ENCODE measurements at regions of chr3 and their contacts with region 1.

Region 1: DNA sequence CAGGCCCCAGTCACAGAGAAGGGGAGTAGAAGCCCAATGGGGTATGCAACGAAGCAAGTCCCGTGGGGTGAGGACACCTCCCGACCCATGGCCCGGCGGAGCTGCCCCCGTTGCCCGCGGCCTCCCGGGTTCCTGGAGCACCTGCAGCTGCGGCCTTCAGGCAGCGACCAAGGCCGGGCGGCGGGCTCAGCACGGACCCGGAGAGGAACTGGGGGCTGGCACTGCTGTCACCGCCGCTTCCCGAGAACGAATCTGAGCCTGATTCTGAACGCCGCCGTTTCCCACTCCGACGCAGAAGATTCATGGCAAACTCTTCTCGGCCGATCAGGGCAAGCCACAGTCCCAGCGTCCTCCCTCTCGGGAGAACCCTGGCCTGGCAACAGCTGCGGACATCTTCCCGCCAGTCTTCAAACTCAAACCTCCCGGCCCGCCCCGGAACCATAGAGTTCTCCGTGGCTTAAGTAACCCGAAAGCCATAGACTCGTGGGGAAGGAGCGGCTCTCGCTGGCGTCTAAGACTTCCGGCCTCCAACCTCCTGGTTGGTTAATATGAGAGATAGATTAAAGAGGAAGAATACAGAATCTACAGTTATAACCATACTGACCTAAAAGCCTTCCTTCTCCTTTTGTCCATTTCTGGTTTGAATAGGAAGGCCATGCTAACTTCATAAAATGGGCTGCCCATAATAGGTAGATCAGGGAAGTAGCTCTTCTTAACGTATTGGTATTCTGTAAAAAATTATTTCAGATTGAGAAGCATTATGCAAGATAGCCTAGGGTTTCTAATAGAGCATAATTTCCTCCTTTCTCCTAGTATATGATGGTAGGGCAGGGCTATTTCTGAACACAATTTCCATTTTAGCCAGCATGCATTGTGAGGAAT is at the start of gene POLQ:
- DNase-seq: peak; percentile 73 to 93 (median 88)
- ATAC-seq: peak; percentile 99
- H3K4me3 ChIP-seq: peak within 1 kb of the TSS; percentile 65 to 72
- H3K4me3 Mint-ChIP-seq: peak within 1 kb of the TSS; percentile 92
- H3K27ac ChIP-seq: peak within 1 kb of the TSS; percentile 53 to 75
- H3K27ac Mint-ChIP-seq: peak within 1 kb of the TSS; percentile 88
- H3K4me1 ChIP-seq: peaks cover 6% of the 10 kb centered on the region
- H3K4me1 Mint-ChIP-seq: peaks cover 12% of the 10 kb centered on the region
- H3K27me3 ChIP-seq: peaks cover 0 to 2% of the 10 kb centered on the region in 2 experiments
- H3K27me3 Mint-ChIP-seq: no peaks in the 10 kb centered on the region
- CTCF ChIP-seq: no peak
- total RNA-seq, gene POLQ: 0.19 to 0.28 TPM

Region 2: GRCh38 chr3:121431726-121432517 is 113.9 kb before region 1 on chr3:
- CTCF ChIA-PET with region 1: no interaction called
- POLR2A ChIA-PET with region 1: no interaction called
- intact Hi-C with region 1: loop called in 1 of 2 experiments (anchors 5 kb)
- DNase-seq: peak in 8 of 9 experiments; percentile 18 to 82 (median 48)
- ATAC-seq: peak; percentile 95
- H3K4me3 ChIP-seq: peak overlapping the region; percentile 26 to 39
- H3K4me3 Mint-ChIP-seq: peak overlapping the region; percentile 81
- H3K27ac ChIP-seq: peak overlapping the region; percentile 2 to 28
- H3K27ac Mint-ChIP-seq: peak overlapping the region; percentile 80
- H3K4me1 ChIP-seq: peaks cover 3% of the 10 kb centered on the region
- H3K4me1 Mint-ChIP-seq: peaks cover 14% of the 10 kb centered on the region
- H3K27me3 ChIP-seq: no peaks in the 10 kb centered on the region
- H3K27me3 Mint-ChIP-seq: no peaks in the 10 kb centered on the region
- CTCF ChIP-seq: no peak

Region 3: GRCh38 chr3:121995161-121996137 is 449.6 kb after region 1 on chr3:
- CTCF ChIA-PET with region 1: no interaction called
- POLR2A ChIA-PET with region 1: no interaction called
- intact Hi-C with region 1: loop called in 1 of 2 experiments (anchors 5 kb)
- DNase-seq: peak in 4 of 9 experiments; percentile 9 to 53 (median 39)
- ATAC-seq: peak; percentile 52
- H3K4me3 ChIP-seq: no peak overlapping the region
- H3K4me3 Mint-ChIP-seq: no peak overlapping the region
- H3K27ac ChIP-seq: no peak overlapping the region
- H3K27ac Mint-ChIP-seq: no peak overlapping the region
- H3K4me1 ChIP-seq: no peaks in the 10 kb centered on the region
- H3K4me1 Mint-ChIP-seq: peaks cover 10% of the 10 kb centered on the region
- H3K27me3 ChIP-seq: no peaks in the 10 kb centered on the region
- H3K27me3 Mint-ChIP-seq: peaks cover 3% of the 10 kb centered on the region
- CTCF ChIP-seq: no peak

Region 4: DNA sequence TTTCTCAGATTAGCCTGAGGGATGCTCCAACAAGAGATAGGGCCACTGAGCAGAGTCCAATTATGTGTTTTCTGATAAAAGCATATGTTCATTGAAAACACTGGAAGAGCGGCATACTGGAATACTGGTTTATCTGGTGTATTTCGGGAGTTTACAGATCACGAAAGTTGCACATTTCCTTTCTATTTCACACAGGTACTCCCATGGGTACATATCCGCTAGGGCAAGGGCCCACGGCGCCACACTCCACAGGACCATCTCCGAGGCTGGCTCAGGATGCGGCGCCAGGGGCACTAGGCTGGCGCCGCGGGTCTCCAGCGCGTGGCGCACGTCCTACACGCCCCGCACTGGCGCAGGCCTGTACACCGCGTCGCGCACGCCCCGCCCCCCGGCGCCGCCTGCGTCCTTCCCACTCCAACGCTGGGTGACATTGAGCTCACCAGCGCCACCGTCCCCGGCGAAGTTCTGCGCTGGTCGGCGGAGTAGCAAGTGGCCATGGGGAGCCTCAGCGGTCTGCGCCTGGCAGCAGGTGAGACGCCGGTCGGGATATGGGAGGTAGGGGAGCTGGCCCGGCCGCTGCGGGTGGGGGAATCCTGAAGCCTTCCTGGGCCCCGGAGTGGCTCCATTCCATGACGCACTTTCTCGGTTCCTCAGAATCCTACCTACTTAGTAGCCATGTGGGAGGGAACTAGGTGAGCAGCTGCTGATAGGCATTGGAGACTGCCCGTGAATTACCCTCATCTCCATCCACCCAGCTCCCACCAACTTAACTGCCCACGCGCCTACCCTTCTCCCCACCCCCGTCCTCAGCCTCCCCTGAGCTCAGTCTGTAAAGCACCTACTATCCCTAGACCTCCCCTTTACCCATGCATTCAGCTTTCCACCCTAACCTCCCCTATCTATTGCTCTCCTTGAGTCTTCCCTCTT is 838.2 kb after region 1 on chr3 and contains the start of gene FAM162A:
- CTCF ChIA-PET with region 1: interaction called, 3 read pairs
- POLR2A ChIA-PET with region 1: interaction called, 5 read pairs
- intact Hi-C with region 1: loop called (anchors 1 kb)
- DNase-seq: peak; percentile 89 to 97 (median 93)
- ATAC-seq: peak; percentile 94
- H3K4me3 ChIP-seq: peak within 1 kb of the TSS; percentile 79 to 91
- H3K4me3 Mint-ChIP-seq: peak within 1 kb of the TSS; percentile 94
- H3K27ac ChIP-seq: peak within 1 kb of the TSS; percentile 73 to 83
- H3K27ac Mint-ChIP-seq: peak within 1 kb of the TSS; percentile 94
- H3K4me1 ChIP-seq: peaks cover 18% of the 10 kb centered on the region
- H3K4me1 Mint-ChIP-seq: peaks cover 51% of the 10 kb centered on the region
- H3K27me3 ChIP-seq: no peaks in the 10 kb centered on the region
- H3K27me3 Mint-ChIP-seq: no peaks in the 10 kb centered on the region
- CTCF ChIP-seq: peak; percentile 66
- total RNA-seq, gene FAM162A: 36.9 to 38.2 TPM

Region 5: DNA sequence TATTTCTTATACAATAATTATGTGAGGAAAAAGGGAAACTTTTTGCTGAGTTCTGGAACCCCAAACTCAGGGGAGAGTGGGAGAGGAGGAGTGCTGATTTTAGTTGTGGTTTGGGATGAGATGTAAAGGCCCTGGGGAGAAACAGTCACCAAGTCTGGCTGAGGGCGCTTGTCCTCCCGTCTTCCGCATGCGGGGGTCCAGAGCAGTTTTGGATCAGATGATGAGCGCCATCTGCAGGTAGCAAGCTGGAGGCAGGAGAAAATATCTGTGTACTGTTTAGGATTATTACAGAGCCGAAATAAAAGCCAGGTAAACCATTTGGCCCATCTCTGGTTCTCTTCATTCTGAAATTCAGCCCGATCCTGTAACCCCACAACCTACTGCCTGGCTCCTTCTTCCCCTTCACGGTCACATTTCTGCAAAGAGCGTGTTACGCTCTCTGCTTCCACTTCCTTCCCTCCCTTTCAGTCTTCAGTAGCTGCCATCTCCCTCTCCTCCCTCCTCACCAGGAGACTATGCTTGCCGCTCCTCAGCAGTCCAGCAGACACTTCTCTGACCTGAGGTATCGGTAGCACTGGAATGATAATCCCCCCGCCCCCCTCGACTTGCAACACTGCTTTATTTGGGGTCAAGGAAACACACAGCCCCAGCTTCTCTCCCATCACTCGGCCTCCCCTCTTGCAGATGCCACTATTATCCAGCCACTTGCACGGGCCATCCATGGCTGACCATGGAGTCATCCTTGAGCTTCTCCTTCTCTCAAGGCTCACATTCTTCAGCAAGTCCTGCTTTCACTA is 1133.5 kb after region 1 on chr3:
- CTCF ChIA-PET with region 1: interaction called, 6 read pairs
- POLR2A ChIA-PET with region 1: interaction called, 8 read pairs
- intact Hi-C with region 1: loop called (anchors 1 kb)
- DNase-seq: peak; percentile 65 to 92 (median 83)
- ATAC-seq: peak; percentile 66
- H3K4me3 ChIP-seq: peak overlapping the region; percentile 88 to 98
- H3K4me3 Mint-ChIP-seq: peak overlapping the region; percentile 93
- H3K27ac ChIP-seq: peak overlapping the region; percentile 95 to 97
- H3K27ac Mint-ChIP-seq: peak overlapping the region; percentile 99
- H3K4me1 ChIP-seq: peaks cover 31% of the 10 kb centered on the region
- H3K4me1 Mint-ChIP-seq: peaks cover 51% of the 10 kb centered on the region
- H3K27me3 ChIP-seq: no peaks in the 10 kb centered on the region
- H3K27me3 Mint-ChIP-seq: no peaks in the 10 kb centered on the region
- CTCF ChIP-seq: peak; percentile 80

Region 6: DNA sequence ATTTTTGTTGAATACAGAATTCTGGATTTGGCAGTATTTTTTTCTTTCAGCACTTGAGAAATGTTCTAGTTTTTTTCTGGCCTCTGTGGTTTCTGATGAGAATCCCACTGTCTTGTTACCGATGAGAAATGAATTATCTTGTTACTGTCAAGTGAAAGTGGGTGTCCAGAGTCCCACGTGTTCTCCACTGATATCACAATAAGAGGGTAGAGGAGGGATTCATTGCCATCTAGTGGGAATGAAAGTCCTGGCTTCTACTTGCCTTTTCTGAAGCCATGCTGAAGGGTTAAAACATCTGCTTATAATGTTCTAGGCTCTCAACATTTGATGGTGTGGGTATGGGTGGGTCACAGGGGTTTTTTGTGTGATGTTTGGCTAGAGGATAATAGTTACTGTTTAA is 1722.0 kb after region 1 on chr3:
- CTCF ChIA-PET with region 1: no interaction called
- POLR2A ChIA-PET with region 1: no interaction called
- intact Hi-C with region 1: loop called in 1 of 2 experiments (anchors 10 kb)
- DNase-seq: no peak
- ATAC-seq: no peak
- H3K4me3 ChIP-seq: no peak overlapping the region
- H3K4me3 Mint-ChIP-seq: no peak overlapping the region
- H3K27ac ChIP-seq: no peak overlapping the region
- H3K27ac Mint-ChIP-seq: no peak overlapping the region
- H3K4me1 ChIP-seq: no peaks in the 10 kb centered on the region
- H3K4me1 Mint-ChIP-seq: no peaks in the 10 kb centered on the region
- H3K27me3 ChIP-seq: no peaks in the 10 kb centered on the region
- H3K27me3 Mint-ChIP-seq: no peaks in the 10 kb centered on the region
- CTCF ChIP-seq: no peak

Measured in CD8-positive, alpha-beta T cell (primary cell).